Right ventricle myocardium inferior (tissue), 1 donor: ENCODE measurements at regions of chr7 and their contacts with region 1.

Region 1: DNA sequence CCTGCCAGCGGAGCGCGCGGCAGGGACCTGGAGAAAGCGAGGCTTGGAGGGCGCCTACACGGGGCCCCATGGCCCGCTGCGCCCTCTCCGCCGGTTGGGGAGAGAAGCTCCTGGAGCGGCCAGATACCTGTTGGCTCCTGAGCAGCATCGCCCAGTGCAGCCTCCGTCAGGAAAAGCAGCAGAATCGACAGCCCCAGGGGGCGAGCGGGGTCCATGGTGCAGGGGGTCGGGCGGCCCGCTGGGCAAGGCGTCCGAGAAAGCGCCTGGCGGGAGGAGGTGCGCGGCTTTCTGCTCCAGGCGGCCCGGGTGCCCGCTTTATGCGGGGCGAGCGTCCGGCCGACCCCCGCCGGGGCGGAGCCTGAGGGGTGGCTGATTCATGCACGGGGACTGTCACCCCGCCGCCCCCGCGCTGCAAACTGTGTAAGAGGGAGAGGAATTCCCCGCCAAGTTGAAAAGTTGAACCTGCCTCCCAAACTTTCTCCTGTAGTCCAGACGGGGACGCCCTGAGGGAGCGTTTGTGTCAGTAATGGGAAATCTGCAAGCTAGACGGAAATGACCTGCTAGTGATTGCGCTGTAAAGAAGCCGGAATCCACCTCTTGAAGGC is at the start of gene TFPI2:
- DNase-seq: peak; percentile 70
- ATAC-seq: peak; percentile 52
- total RNA-seq, gene TFPI2: 2.4 TPM

Region 2: GRCh38 chr7:94223375-94224070 is 333.0 kb after region 1 on chr7:
- intact Hi-C with region 1: loop called (anchors 10 kb)
- DNase-seq: no peak
- ATAC-seq: no peak

Region 3: DNA sequence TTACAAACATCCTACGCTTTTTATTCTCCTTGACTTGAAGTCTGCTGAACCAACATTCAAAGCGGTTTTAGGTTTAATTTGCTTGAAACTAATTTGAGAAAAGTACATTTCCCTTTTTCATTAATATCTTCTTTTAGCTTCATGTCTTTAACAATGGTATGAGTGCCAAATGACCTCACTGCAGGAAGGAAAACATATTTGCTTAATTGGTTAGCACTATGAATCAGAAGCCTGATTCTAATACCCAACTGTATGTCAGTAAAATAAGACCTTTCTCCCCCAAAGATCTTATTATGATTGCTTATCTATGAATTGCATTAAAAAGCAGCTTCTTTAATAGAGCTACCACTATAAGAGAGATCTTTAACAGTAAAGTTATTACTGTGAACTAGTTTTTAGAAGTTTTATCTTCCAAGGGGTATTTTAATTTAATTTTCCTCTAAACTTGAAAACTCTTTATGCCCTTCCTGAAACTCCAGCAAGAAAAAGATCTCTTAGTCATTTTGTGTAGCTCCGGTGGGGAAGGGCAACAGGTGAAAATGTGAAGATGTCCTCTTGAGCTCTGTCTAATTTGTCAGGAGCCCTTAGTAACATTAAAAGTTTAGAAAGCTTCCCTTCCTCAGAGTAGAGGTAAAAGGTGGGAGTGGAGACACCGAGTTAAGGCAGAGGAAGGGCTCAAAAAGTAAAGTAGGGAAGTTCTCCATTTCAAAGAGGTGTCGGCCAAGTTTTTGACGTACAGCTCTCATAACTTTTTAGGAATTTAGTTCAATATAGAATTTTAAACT is 510.3 kb after region 1 on chr7:
- intact Hi-C with region 1: loop called (anchors 10 kb)
- DNase-seq: no peak
- ATAC-seq: no peak